Dendritic cell treated with granulocyte-macrophage colony-stimulating factor and Interleukin-4, amounts not matched to agents 40 ng/mL and 50 ng/mL, for 4 days (primary cell): ENCODE measurements at regions of chr5 and their contacts with region 1.

Region 1: GRCh38 chr5:138575194-138576015 is at the start of gene HSPA9:
- H3K4me3 Mint-ChIP-seq: peak within 1 kb of the TSS; percentile 89
- H3K27ac Mint-ChIP-seq: peak within 1 kb of the TSS; percentile 100
- H3K4me1 Mint-ChIP-seq: peaks cover 17% of the 10 kb centered on the region
- H3K27me3 Mint-ChIP-seq: no peaks in the 10 kb centered on the region

Region 2: DNA sequence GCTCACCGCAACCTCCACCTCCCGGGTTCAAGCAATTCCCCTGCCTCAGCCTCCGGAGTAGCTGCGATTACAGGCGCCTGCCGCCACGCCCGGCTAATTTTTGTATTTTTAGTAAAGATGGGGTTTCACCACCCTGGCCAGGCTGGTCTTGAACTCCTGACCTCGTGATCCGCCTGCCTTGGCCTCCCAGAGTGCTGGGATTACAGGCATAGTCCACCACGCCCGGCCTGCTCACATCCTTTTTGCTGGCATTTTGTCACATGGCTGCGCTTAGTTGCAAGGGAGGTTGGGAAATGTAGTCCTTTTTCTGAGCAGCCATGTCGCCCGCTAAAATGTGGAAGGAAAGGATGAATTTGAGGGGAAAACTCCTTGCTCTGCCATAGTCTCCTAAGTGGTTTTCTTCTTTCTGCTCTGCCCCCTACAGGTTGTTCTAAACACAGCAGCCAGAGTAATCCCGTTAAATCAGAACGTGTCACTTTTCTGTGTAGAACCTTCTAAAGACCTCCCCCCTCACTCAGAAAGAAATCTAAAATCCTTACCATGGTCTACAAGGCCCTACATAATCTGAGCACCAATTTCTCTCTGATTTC is 57.6 kb after region 1 on chr5:
- intact Hi-C with region 1: loop called (anchors 1 kb)
- H3K4me3 Mint-ChIP-seq: no peak overlapping the region
- H3K27ac Mint-ChIP-seq: no peak overlapping the region
- H3K4me1 Mint-ChIP-seq: peaks cover 6% of the 10 kb centered on the region
- H3K27me3 Mint-ChIP-seq: no peaks in the 10 kb centered on the region

Region 3: GRCh38 chr5:139273572-139274289 is 698.3 kb after region 1 on chr5:
- intact Hi-C with region 1: loop called (anchors 5 kb)
- H3K4me3 Mint-ChIP-seq: peak overlapping the region; percentile 81
- H3K27ac Mint-ChIP-seq: peak overlapping the region; percentile 85
- H3K4me1 Mint-ChIP-seq: peaks cover 64% of the 10 kb centered on the region
- H3K27me3 Mint-ChIP-seq: no peaks in the 10 kb centered on the region